ENCODE measurements at regions of chr17 and their contacts with region 1.

Region 1: GRCh38 chr17:34361478-34362061 is 1.5 kb downstream of the CCL1 start:
- DNase-seq: peak; percentile 72
- H3K4me3 Mint-ChIP-seq: peak overlapping the region; percentile 41
- H3K27ac Mint-ChIP-seq: no peak overlapping the region
- H3K4me1 Mint-ChIP-seq: peaks cover 53% of the 10 kb centered on the region
- H3K27me3 Mint-ChIP-seq: peaks cover 13% of the 10 kb centered on the region

Region 2: DNA sequence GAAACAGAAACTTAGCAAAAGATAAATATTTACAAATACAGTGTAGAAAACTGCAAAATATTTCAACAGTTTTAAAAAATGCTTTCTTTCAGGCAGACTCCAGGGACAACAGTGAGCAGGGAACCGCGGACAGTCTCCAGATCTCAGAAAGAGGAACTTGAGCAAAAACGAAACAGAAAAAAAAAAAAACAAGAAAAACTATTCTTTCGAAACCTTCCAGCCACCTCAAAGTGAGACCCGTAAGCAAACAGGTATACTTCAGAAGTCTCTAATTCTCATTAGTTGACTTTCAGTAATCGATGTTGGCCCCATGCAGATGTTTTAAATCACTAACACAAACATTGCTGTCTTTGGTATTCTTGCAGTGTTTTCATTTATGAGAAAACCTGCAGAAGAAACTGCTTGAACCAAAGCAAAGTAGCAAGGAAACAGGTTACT is 17.1 kb after region 1 on chr17:
- intact Hi-C with region 1: loop called (anchors 1 kb)
- DNase-seq: peak; percentile 26
- H3K4me3 Mint-ChIP-seq: peak overlapping the region; percentile 59
- H3K27ac Mint-ChIP-seq: peak overlapping the region; percentile 84
- H3K4me1 Mint-ChIP-seq: peaks cover 72% of the 10 kb centered on the region
- H3K27me3 Mint-ChIP-seq: no peaks in the 10 kb centered on the region

Region 3: GRCh38 chr17:34413443-34414119 is 52.0 kb after region 1 on chr17:
- intact Hi-C with region 1: loop called (anchors 10 kb)
- DNase-seq: no peak
- H3K4me3 Mint-ChIP-seq: no peak overlapping the region
- H3K27ac Mint-ChIP-seq: no peak overlapping the region
- H3K4me1 Mint-ChIP-seq: peaks cover 36% of the 10 kb centered on the region
- H3K27me3 Mint-ChIP-seq: peaks cover 45% of the 10 kb centered on the region

Measured in activated T-helper 2 cell treated with anti-CD3 and anti-CD28 coated beads, Interferon-gamma antibody, Interleukin-2, Interleukin-4, amounts not matched to agents 10 μg/mL and 5 μg/mL and 100 μg/mL, durations not matched to agents 14 hours and 24 hours and 36 hours (primary cell).